ENCODE measurements at regions of chr4 and their contacts with region 1.

Region 1: GRCh38 chr4:781493-782216 is 44.3 kb downstream of the CPLX1 start:
- DNase-seq: peak; percentile 99 to 100
- ATAC-seq: peak; percentile 99
- H3K4me3 ChIP-seq: peak overlapping the region; percentile 65 to 75
- H3K27ac ChIP-seq: peak overlapping the region in 1 of 2 donors; percentile 92
- H3K4me1 ChIP-seq: peaks cover 0 to 2% of the 10 kb centered on the region in 2 donors
- H3K27me3 ChIP-seq: no peaks in the 10 kb centered on the region

Region 2: DNA sequence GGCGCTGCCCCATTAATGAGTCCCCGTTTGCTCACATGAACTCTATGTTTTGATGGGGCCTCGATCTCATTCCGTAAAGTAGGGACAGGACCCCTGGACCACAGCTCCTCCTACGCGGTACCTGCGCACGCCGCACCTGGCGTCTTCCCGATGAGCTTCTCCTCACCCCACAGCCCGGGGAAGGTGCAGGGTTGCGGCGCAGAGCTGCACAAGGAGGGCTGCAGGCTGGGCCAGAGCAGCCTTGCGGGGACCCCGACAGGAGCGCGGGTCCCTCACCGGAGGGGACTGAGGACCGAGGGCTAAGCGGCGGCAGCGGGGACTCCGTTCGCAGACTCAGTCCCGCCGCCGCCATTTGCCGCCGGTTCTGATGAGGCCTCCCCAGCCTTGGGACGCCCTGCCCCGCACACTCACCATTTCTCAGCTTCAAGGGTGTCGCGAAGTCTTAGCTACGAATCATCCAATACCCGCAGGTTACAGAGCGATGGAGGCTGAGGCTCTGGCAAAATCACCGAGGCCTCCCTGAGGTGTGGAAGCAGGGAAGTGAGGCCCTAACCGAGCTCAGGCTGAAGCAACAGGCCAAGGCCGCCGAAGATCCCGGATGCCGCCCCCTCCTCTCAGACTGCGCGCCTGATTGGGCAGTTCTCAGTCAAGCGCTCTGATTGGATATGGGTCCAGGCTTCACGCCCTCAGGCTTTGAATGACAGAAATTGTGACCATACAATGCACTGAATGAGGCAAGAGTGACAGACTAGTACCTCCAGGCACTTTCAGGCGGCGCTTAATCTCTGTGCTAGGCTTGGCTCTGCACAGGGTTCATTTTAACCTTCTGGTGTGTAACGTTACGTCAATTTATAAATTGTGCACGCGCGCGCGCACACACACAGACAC is 307.8 kb before region 1 on chr4:
- intact Hi-C with region 1: loop called in 1 of 2 experiments (anchors 10 kb)
- DNase-seq: peak; percentile 95 to 97
- ATAC-seq: peak; percentile 100
- H3K4me3 ChIP-seq: peak overlapping the region; percentile 38 to 87
- H3K27ac ChIP-seq: peak overlapping the region in 1 of 2 donors; percentile 65
- H3K4me1 ChIP-seq: no peaks in the 10 kb centered on the region
- H3K27me3 ChIP-seq: no peaks in the 10 kb centered on the region

Region 3: DNA sequence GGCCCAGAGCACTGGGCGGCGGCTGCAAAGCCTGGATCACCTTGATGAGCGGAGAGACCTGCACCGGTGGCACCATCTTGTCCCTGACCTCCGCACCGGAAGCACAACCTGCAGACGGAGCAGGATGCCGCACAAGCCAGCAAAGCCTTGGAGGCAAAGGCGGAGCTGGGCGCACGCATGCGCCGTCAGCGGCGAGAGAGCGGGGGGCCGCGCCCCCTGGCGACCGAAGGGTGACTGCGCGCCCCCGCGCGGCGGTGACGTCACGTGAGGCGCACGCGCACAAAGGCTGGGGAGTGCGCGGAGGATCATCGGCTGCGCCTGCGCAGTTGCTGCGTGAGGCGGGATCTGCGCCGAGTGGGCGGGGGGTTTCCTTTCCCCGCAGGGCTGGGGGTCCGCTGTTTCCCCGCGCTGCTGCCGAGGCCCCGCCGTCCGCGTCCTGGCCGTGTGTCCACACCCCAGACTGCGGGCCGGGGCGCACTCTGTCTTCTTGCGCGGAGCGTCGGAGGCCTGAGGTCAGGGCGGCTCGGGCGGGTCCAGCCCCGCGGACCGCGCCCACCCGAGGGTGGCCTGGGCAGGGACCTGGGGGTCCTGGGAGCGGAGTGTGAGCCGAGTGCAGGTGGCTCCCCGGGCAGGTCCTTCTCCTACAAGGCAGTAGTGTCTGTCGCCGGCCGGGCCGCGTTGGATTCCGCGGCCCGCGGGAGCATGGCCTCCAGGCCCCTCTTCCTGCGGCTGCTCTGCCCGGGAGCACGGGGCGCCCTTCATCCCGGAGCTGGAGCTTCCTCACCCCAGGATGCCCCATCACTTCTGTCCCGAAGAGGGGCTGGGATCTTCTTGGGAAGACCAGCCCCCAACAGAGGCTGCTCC is 107.3 kb before region 1 on chr4 and contains the starts of genes ATP5ME and MYL5:
- intact Hi-C with region 1: loop called in 1 of 2 experiments (anchors 10 kb)
- DNase-seq: peak; percentile 98 to 99
- ATAC-seq: peak; percentile 96
- H3K4me3 ChIP-seq: peak within 1 kb of the TSS; percentile 75 to 85
- H3K27ac ChIP-seq: peak within 1 kb of the TSS in 1 of 2 donors; percentile 35
- H3K4me1 ChIP-seq: no peaks in the 10 kb centered on the region
- H3K27me3 ChIP-seq: no peaks in the 10 kb centered on the region
- total RNA-seq, gene ATP5ME: 152 to 162 TPM
- total RNA-seq, gene MYL5: 5.7 to 11.5 TPM

Region 4: GRCh38 chr4:705278-706082 is 76.2 kb before region 1 on chr4 and contains the start of gene PCGF3:
- intact Hi-C with region 1: loop called in 1 of 2 experiments (anchors 10 kb)
- DNase-seq: peak; percentile 98 to 100
- ATAC-seq: peak; percentile 97
- H3K4me3 ChIP-seq: peak within 1 kb of the TSS; percentile 74 to 86
- H3K27ac ChIP-seq: no peak within 1 kb of the TSS
- H3K4me1 ChIP-seq: no peaks in the 10 kb centered on the region
- H3K27me3 ChIP-seq: no peaks in the 10 kb centered on the region
- total RNA-seq, gene PCGF3: 35.7 to 59.4 TPM